ENCODE measurements at regions of chr11 and their contacts with region 1.

Region 1: GRCh38 chr11:111220716-111221115 is 24.8 kb upstream of the POU2AF2 start:
- DNase-seq: no peak
- ATAC-seq: no peak
- H3K4me3 ChIP-seq: no peak overlapping the region
- H3K4me3 Mint-ChIP-seq: no peak overlapping the region
- H3K27ac ChIP-seq: no peak overlapping the region
- H3K27ac Mint-ChIP-seq: no peak overlapping the region
- H3K4me1 ChIP-seq: peaks cover 2 to 9% of the 10 kb centered on the region in 2 experiments
- H3K4me1 Mint-ChIP-seq: peaks cover 11 to 12% (median 12%) of the 10 kb centered on the region in 3 donors
- H3K27me3 ChIP-seq: peaks cover 2 to 4% of the 10 kb centered on the region in 2 experiments
- H3K27me3 Mint-ChIP-seq: peaks cover 17 to 32% of the 10 kb centered on the region in 2 donors

Region 2: GRCh38 chr11:110185121-110185591 is 1035.6 kb before region 1 on chr11:
- CTCF ChIA-PET with region 1: no interaction called
- POLR2A ChIA-PET with region 1: no interaction called
- DNase-seq: no peak
- ATAC-seq: no peak
- H3K4me3 ChIP-seq: no peak overlapping the region
- H3K4me3 Mint-ChIP-seq: no peak overlapping the region
- H3K27ac ChIP-seq: no peak overlapping the region
- H3K27ac Mint-ChIP-seq: no peak overlapping the region
- H3K4me1 ChIP-seq: no peaks in the 10 kb centered on the region
- H3K4me1 Mint-ChIP-seq: no peaks in the 10 kb centered on the region
- H3K27me3 ChIP-seq: peaks cover 0 to 20% of the 10 kb centered on the region in 2 experiments
- H3K27me3 Mint-ChIP-seq: peaks cover 0 to 8% of the 10 kb centered on the region in 2 donors

Region 3: DNA sequence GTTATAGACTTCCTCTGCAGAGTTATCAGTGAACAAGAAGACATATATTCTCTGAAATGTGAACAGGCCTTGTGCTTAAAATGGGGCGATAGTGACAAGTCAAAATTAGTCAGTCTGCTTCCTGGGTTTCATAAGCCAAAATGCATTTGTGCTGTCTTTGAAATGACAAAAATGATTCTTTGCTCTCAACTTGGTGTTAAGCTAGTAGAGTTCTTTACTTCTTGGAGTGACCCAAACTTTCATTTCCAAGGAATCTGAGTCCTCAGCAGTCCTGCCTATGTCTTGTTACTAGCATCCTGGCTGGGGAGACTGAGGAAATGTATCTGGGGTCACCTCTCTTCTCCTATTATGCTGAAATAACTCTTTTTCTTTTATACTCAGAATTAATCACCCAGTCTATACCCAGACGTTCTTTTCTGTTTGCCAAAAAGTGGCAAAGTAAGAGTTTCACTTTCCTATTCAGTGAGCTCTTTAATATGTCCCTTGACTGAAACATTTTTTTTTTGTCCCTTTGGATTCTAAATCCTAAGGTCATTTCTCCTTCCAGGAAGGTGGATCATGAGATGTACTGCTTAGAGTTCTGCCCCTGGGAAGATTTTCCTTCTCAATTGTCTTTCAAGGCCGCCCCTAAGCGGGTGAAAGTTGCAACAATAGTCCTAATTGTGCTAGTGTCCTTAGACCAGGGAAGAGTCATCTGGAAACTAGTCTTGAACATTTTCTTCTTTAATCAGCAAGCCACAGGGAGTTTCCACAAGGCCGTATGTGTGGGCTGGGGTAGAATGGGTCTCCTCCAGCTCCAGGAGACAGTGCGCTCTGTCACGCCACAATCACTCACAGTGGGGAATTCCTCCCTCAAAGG is 871.3 kb before region 1 on chr11:
- CTCF ChIA-PET with region 1: interaction called in 1 of 2 experiments, 12 read pairs
- POLR2A ChIA-PET with region 1: no interaction called
- DNase-seq: peak in 1 of 35 experiments; percentile 28
- ATAC-seq: peak in 2 of 4 experiments; percentile 21 to 43
- H3K4me3 ChIP-seq: no peak overlapping the region
- H3K4me3 Mint-ChIP-seq: peak overlapping the region; percentile 8 to 45 (median 27)
- H3K27ac ChIP-seq: peak overlapping the region; percentile 55
- H3K27ac Mint-ChIP-seq: peak overlapping the region; percentile 33 to 81
- H3K4me1 ChIP-seq: peaks cover 2 to 22% of the 10 kb centered on the region in 2 experiments
- H3K4me1 Mint-ChIP-seq: peaks cover 27 to 35% (median 31%) of the 10 kb centered on the region in 3 donors
- H3K27me3 ChIP-seq: no peaks in the 10 kb centered on the region
- H3K27me3 Mint-ChIP-seq: no peaks in the 10 kb centered on the region

Region 4: GRCh38 chr11:110376711-110377324 is 843.9 kb before region 1 on chr11:
- CTCF ChIA-PET with region 1: interaction called in 1 of 2 experiments, 11 read pairs
- POLR2A ChIA-PET with region 1: no interaction called
- DNase-seq: peak in 10 of 35 experiments; percentile 4 to 68 (median 10)
- ATAC-seq: peak; percentile 48 to 59 (median 55)
- H3K4me3 ChIP-seq: no peak overlapping the region
- H3K4me3 Mint-ChIP-seq: no peak overlapping the region
- H3K27ac ChIP-seq: no peak overlapping the region
- H3K27ac Mint-ChIP-seq: no peak overlapping the region
- H3K4me1 ChIP-seq: peaks cover 0 to 3% of the 10 kb centered on the region in 2 experiments
- H3K4me1 Mint-ChIP-seq: peaks cover 0 to 5% (median 4%) of the 10 kb centered on the region in 3 donors
- H3K27me3 ChIP-seq: no peaks in the 10 kb centered on the region
- H3K27me3 Mint-ChIP-seq: peaks cover 0 to 3% of the 10 kb centered on the region in 2 donors

Region 5: GRCh38 chr11:110463153-110463552 is 757.6 kb before region 1 on chr11:
- CTCF ChIA-PET with region 1: interaction called, 3 to 11 read pairs
- POLR2A ChIA-PET with region 1: no interaction called
- DNase-seq: peak in 18 of 35 experiments; percentile 2 to 47 (median 6)
- ATAC-seq: peak in 1 of 4 experiments; percentile 43
- H3K4me3 ChIP-seq: no peak overlapping the region
- H3K4me3 Mint-ChIP-seq: no peak overlapping the region
- H3K27ac ChIP-seq: no peak overlapping the region
- H3K27ac Mint-ChIP-seq: no peak overlapping the region
- H3K4me1 ChIP-seq: no peaks in the 10 kb centered on the region
- H3K4me1 Mint-ChIP-seq: peaks cover 0 to 5% (median 4%) of the 10 kb centered on the region in 3 donors
- H3K27me3 ChIP-seq: no peaks in the 10 kb centered on the region
- H3K27me3 Mint-ChIP-seq: no peaks in the 10 kb centered on the region

Region 6: GRCh38 chr11:110505528-110506284 is 715.0 kb before region 1 on chr11:
- CTCF ChIA-PET with region 1: no interaction called
- POLR2A ChIA-PET with region 1: no interaction called
- DNase-seq: no peak
- ATAC-seq: no peak
- H3K4me3 ChIP-seq: no peak overlapping the region
- H3K4me3 Mint-ChIP-seq: no peak overlapping the region
- H3K27ac ChIP-seq: no peak overlapping the region
- H3K27ac Mint-ChIP-seq: no peak overlapping the region
- H3K4me1 ChIP-seq: no peaks in the 10 kb centered on the region
- H3K4me1 Mint-ChIP-seq: no peaks in the 10 kb centered on the region
- H3K27me3 ChIP-seq: peaks cover 0 to 8% of the 10 kb centered on the region in 2 experiments
- H3K27me3 Mint-ChIP-seq: peaks cover 0 to 3% of the 10 kb centered on the region in 2 donors

Region 7: DNA sequence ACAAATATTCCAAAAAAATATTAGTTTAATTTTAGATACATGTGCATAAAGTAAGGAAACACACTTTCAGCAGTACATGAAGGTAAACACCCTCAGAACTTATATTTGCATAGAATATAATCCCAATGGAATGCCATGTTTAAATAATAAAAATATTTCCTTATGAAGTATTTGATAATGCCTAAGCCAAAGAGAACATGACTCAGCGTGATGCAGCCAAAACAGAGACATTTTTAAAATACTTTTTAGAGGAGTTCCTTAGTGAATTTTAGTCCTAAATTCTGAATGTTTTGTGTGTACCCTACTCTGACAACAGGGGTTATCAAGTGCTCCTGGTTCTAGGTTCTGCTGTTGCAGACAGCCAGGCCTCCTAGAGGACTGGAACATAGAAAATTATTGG is 14.2 kb before region 1 on chr11:
- CTCF ChIA-PET with region 1: no interaction called
- POLR2A ChIA-PET with region 1: no interaction called
- DNase-seq: no peak
- ATAC-seq: no peak
- H3K4me3 ChIP-seq: no peak overlapping the region
- H3K4me3 Mint-ChIP-seq: no peak overlapping the region
- H3K27ac ChIP-seq: no peak overlapping the region
- H3K27ac Mint-ChIP-seq: no peak overlapping the region
- H3K4me1 ChIP-seq: no peaks in the 10 kb centered on the region
- H3K4me1 Mint-ChIP-seq: no peaks in the 10 kb centered on the region
- H3K27me3 ChIP-seq: no peaks in the 10 kb centered on the region
- H3K27me3 Mint-ChIP-seq: peaks cover 9 to 14% of the 10 kb centered on the region in 2 donors

Region 8: DNA sequence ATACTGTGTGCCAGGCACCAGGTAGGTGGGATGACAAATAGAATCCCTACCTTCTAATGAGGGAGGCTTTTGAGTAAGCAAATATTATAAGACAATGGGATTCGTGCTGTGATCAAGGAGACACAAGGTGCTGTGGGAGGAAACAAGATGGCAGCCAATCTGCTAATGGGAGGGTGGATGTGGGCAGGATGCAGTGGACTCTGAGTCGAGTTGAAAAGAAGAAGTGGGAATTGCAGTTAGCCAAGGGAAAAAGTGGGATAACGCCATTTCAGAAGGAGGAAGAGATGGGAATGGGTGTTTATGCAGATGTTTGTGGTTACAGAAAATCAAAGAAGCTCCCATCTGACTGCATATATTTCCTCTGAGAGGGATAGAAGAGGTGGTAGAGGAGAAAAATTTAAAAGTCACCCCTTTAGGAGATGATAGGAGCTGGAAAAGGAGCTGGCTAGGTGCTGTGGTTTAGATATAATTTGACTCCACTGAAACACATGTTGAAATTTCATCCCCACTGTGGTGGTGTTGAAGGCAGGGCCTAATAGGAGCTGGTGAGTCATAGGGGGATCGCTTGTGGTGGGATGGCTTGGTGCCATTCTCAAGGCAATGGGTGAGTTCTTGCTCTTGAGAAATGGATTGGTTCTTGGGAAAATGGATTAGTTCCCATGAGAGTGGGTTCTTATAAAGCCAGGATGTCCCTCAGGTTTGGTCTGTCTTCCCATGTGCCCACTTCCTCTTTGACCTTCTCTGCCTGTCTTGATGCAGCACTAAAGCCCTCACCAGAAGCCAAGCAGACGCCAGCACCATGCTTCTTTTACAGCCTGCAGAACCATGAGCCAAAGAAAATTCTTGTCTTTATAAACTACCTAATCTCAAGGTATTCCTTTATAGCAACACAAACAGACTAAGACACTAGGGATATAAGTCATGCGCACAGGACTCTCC is 188.3 kb after region 1 on chr11:
- CTCF ChIA-PET with region 1: no interaction called
- POLR2A ChIA-PET with region 1: no interaction called
- DNase-seq: no peak
- ATAC-seq: no peak
- H3K4me3 ChIP-seq: no peak overlapping the region
- H3K4me3 Mint-ChIP-seq: no peak overlapping the region
- H3K27ac ChIP-seq: no peak overlapping the region
- H3K27ac Mint-ChIP-seq: no peak overlapping the region
- H3K4me1 ChIP-seq: peaks cover 0 to 6% of the 10 kb centered on the region in 2 experiments
- H3K4me1 Mint-ChIP-seq: peaks cover 2 to 10% (median 6%) of the 10 kb centered on the region in 3 donors
- H3K27me3 ChIP-seq: peaks cover 0 to 5% of the 10 kb centered on the region in 2 experiments
- H3K27me3 Mint-ChIP-seq: no peaks in the 10 kb centered on the region

Measured in T-cell (primary cell).